ENCODE measurements at regions of chr5 and their contacts with region 1.

Region 1: GRCh38 chr5:156783092-156783491 is 67.0 kb upstream of the PPP1R2B start:
- DNase-seq: no peak
- ATAC-seq: no peak
- H3K4me3 ChIP-seq: no peak overlapping the region
- H3K4me3 Mint-ChIP-seq: no peak overlapping the region
- H3K27ac ChIP-seq: no peak overlapping the region
- H3K27ac Mint-ChIP-seq: no peak overlapping the region
- H3K4me1 ChIP-seq: no peaks in the 10 kb centered on the region
- H3K4me1 Mint-ChIP-seq: peaks cover 0 to 2% (median 0%) of the 10 kb centered on the region in 3 donors
- H3K27me3 ChIP-seq: peaks cover 0 to 9% of the 10 kb centered on the region in 2 experiments
- H3K27me3 Mint-ChIP-seq: peaks cover 11 to 16% of the 10 kb centered on the region in 2 donors

Region 2: GRCh38 chr5:157100140-157100679 is 317.1 kb after region 1 on chr5:
- CTCF ChIA-PET with region 1: no interaction called
- POLR2A ChIA-PET with region 1: interaction called in 1 of 2 experiments, 11 read pairs
- DNase-seq: no peak
- ATAC-seq: no peak
- H3K4me3 ChIP-seq: no peak overlapping the region
- H3K4me3 Mint-ChIP-seq: no peak overlapping the region
- H3K27ac ChIP-seq: no peak overlapping the region
- H3K27ac Mint-ChIP-seq: no peak overlapping the region
- H3K4me1 ChIP-seq: no peaks in the 10 kb centered on the region
- H3K4me1 Mint-ChIP-seq: peaks cover 0 to 6% (median 6%) of the 10 kb centered on the region in 3 donors
- H3K27me3 ChIP-seq: no peaks in the 10 kb centered on the region
- H3K27me3 Mint-ChIP-seq: no peaks in the 10 kb centered on the region

Measured in T-cell (primary cell).